Gastrocnemius medialis (tissue), 4 donors: ENCODE measurements at regions of chr11 and their contacts with region 1.

Region 1: GRCh38 chr11:86291466-86292262 is 10.4 kb upstream of the HIKESHI start:
- DNase-seq: no peak
- ATAC-seq: peak in 1 of 2 donors; percentile 36
- H3K4me3 ChIP-seq: no peak overlapping the region
- H3K27ac ChIP-seq: no peak overlapping the region
- H3K4me1 ChIP-seq: no peaks in the 10 kb centered on the region
- H3K27me3 ChIP-seq: no peaks in the 10 kb centered on the region
- CTCF ChIP-seq: peak in 4 of 5 experiments; percentile 14 to 41 (median 21)
- POLR2A ChIP-seq: no peak

Region 2: DNA sequence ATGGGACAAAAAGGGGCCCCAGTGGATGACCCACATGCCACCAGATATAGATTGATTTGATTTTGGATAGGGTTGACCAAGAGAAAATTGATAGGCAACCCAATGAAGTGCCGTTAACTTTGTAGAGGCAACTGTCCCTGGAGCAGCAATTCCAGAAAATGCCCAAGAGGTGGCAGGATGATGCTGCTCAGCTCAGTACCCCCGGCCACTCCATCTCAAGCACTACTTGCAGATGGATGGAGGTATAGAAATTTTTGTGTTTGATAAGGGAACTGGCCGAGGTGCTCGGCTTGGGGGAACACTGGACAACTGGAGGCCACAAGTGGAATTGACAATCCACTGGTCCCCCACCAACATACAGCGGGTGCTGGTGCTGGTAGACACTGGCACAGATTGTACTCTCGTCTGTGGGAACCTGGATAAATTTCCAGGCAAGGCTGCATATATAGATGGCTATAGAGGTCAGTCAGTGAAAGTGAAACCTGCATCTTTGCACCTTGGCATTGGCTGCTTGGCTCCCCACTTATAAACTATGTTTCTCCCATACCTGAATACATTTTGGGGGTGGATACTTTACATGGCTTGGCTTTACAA is 350.2 kb before region 1 on chr11:
- in situ Hi-C with region 1: no loop called
- intact Hi-C with region 1: loop called (anchors 10 kb)
- DNase-seq: peak; percentile 32 to 45
- ATAC-seq: peak; percentile 70 to 81
- H3K4me3 ChIP-seq: no peak overlapping the region
- H3K27ac ChIP-seq: no peak overlapping the region
- H3K4me1 ChIP-seq: peaks cover 0 to 9% of the 10 kb centered on the region in 2 donors
- H3K27me3 ChIP-seq: no peaks in the 10 kb centered on the region
- CTCF ChIP-seq: peak; percentile 63 to 79 (median 73)
- POLR2A ChIP-seq: no peak